ENCODE measurements at regions of chr5 and their contacts with region 1.

Region 1: DNA sequence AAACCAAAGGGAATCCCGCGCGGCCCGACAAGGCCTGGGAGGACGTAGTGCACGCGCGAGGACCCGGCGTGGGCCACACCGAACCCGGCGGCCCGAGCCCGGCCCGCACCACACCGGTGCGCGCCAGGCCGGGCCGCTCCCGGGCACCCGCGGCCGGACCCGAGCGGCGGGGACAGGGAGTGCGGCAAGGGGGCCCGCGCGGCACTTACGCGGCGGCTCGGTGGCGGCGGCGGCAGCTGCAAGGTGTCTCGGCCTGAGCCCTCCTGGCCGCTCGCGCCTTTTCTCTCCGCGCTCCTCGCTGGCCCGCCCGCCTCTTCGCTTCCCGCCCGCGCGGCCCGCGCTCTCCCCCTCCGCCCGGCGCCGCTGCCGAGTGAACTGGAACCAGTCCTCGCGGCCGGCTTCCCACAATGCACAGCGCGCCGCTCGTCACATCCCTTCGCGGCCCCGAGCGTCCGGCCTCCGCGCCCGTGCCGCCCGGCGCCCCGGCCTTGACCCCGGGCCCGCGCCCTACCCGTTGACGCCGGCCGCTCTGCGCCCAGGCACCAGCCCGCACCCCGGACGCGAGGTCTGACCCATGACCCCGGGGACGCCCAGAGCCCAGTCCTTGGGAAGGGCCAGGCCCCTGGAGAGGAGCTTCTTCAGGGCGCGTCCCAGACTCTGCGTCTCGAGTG is at the start of gene MACROH2A1:
- DNase-seq: peak; percentile 91
- H3K4me3 Mint-ChIP-seq: peak within 1 kb of the TSS; percentile 83
- H3K27ac Mint-ChIP-seq: peak within 1 kb of the TSS; percentile 92
- H3K4me1 Mint-ChIP-seq: peaks cover 39% of the 10 kb centered on the region
- H3K27me3 Mint-ChIP-seq: no peaks in the 10 kb centered on the region
- CTCF ChIP-seq: no peak
- total RNA-seq, gene MACROH2A1: 266 and 306 TPM in 2 replicates

Region 2: DNA sequence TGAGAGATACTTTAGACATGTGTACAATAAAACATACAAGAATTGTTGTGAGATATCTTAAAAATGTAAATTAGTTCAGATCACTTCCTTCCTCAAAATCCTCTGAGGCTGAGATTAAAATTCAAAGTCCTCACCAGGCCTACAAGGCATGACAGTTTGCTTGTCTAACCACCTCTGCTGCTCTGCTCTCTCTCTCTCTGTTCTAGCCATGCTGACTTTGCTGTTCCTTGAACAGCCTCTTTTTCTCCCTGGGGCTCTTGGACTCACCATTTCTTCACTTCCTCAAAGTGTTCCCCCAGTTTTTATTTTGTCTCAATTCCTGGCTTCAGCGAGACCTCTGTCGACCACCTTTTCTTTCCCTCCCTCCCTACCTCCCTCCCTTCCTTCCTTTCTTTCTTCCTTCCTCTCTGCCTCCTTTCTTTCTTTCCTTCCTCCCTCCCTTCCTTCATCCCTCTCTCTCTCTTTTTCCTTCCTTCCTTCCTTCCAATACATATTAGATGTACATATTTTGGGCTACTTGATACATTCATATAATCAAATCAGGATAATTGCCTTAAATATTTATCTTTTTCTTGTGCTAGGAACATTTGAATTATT is 404.3 kb before region 1 on chr5:
- CTCF ChIA-PET with region 1: no interaction called
- POLR2A ChIA-PET with region 1: no interaction called
- intact Hi-C with region 1: no loop called
- DNase-seq: no peak
- H3K4me3 Mint-ChIP-seq: no peak overlapping the region
- H3K27ac Mint-ChIP-seq: no peak overlapping the region
- H3K4me1 Mint-ChIP-seq: no peaks in the 10 kb centered on the region
- H3K27me3 Mint-ChIP-seq: no peaks in the 10 kb centered on the region
- CTCF ChIP-seq: no peak

Region 3: DNA sequence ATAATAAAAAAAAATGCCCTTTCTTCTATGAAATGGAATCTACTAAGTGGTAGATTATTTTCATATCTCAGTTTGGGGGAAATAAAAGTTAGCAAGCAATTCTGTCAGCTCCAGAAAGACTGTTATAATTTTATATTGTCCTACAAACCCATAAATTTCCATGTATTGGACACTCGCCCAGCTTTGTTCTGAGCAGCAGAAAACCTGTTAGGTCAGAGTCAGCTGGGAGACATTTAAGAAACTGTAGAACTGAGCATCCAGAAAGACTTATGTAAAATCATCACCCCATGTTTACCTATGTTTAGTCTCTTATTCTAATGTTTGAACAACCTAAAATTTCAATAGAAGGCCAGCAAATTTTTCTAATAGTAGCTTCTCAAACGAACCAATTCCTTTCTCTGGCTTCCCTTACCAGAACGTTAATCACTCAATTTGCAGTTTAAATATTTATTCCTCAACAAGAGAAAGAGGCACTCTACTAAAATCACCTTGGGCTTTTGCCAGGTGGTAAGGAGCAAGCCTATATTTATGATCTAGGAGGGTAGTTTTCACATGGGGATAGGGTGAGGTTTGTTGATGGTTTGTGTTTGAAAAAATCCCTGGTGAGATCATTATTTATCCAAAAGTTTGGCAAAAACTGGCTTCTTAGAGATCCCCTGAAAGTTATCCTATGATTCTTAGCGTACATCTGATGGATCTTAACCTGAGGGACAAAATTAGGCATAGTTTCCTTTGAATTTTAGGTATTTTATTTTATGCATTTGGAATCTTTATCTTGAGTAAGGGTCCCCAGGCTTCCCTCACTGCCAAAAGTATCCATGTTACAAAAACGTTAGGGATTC is 34.3 kb before region 1 on chr5:
- CTCF ChIA-PET with region 1: no interaction called
- POLR2A ChIA-PET with region 1: no interaction called
- intact Hi-C with region 1: no loop called
- DNase-seq: no peak
- H3K4me3 Mint-ChIP-seq: no peak overlapping the region
- H3K27ac Mint-ChIP-seq: peak overlapping the region; percentile 61
- H3K4me1 Mint-ChIP-seq: peaks cover 5% of the 10 kb centered on the region
- H3K27me3 Mint-ChIP-seq: no peaks in the 10 kb centered on the region
- CTCF ChIP-seq: no peak

Region 4: GRCh38 chr5:135410348-135410747 is 11.4 kb after region 1 on chr5:
- CTCF ChIA-PET with region 1: interaction called, 3 read pairs
- POLR2A ChIA-PET with region 1: interaction called, 15 read pairs
- intact Hi-C with region 1: no loop called
- DNase-seq: no peak
- H3K4me3 Mint-ChIP-seq: no peak overlapping the region
- H3K27ac Mint-ChIP-seq: no peak overlapping the region
- H3K4me1 Mint-ChIP-seq: no peaks in the 10 kb centered on the region
- H3K27me3 Mint-ChIP-seq: peaks cover 55% of the 10 kb centered on the region
- CTCF ChIP-seq: no peak

Region 5: GRCh38 chr5:136087961-136088871 is 689.2 kb after region 1 on chr5:
- CTCF ChIA-PET with region 1: no interaction called
- POLR2A ChIA-PET with region 1: no interaction called
- intact Hi-C with region 1: no loop called
- DNase-seq: peak; percentile 84
- H3K4me3 Mint-ChIP-seq: no peak overlapping the region
- H3K27ac Mint-ChIP-seq: peak overlapping the region; percentile 8
- H3K4me1 Mint-ChIP-seq: peaks cover 10% of the 10 kb centered on the region
- H3K27me3 Mint-ChIP-seq: no peaks in the 10 kb centered on the region
- CTCF ChIP-seq: no peak

Measured in MCF 10A (cell line).